RWPE1 (cell line): ENCODE measurements at regions of chr11 and their contacts with region 1.

Region 1: DNA sequence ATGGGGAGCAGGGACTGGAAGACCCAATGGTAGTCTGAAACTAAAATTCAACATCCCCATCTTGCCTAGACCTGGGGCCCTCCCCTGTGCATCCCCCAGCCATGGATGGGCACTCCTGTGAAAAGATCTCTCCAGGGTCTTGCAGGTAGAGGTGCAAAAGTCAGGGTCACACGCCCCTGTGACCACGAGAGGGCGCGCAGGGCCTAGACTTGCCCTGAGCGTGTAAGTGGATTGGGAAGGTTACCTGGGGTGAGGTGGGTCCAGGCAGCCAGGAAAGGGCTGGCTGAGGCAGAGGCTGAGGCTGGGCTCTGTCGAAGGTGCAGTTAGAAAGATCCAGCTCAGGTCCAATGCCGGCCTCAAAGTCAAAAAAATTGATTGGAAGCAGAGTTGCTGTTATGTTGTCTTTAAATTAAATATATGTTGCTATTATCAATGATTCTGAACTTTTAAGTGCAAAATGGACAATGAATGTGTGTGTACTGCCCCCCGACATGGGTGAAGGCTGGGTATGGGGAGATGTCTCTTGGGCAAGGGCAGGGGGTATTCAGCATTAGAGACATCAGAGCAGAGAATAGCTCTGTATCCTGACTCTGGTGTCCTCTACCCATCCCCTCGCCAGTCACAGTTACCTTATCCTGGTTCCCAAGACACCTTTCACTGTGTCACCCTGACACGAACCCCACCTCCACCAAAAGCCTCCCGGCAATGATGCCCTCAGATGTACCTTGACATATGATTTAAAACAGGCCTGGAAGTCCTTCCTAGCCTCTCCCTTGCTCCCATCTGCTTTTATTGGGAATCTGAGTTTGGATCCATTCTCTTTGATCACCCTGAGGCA is 4.7 kb upstream of the POU2F3 start:
- DNase-seq: peak; percentile 90
- H3K27ac ChIP-seq: peak overlapping the region; percentile 39
- CTCF ChIP-seq: peak; percentile 86

Region 2: GRCh38 chr11:120303004-120303637 is 67.9 kb after region 1 on chr11:
- CTCF ChIA-PET with region 1: interaction called, 51 read pairs
- POLR2A ChIA-PET with region 1: no interaction called
- DNase-seq: peak; percentile 67
- H3K27ac ChIP-seq: no peak overlapping the region
- CTCF ChIP-seq: peak; percentile 85